Naive thymus-derived CD8-positive, alpha-beta T cell (primary cell): ENCODE measurements at regions of chr19 and their contacts with region 1.

Region 1: DNA sequence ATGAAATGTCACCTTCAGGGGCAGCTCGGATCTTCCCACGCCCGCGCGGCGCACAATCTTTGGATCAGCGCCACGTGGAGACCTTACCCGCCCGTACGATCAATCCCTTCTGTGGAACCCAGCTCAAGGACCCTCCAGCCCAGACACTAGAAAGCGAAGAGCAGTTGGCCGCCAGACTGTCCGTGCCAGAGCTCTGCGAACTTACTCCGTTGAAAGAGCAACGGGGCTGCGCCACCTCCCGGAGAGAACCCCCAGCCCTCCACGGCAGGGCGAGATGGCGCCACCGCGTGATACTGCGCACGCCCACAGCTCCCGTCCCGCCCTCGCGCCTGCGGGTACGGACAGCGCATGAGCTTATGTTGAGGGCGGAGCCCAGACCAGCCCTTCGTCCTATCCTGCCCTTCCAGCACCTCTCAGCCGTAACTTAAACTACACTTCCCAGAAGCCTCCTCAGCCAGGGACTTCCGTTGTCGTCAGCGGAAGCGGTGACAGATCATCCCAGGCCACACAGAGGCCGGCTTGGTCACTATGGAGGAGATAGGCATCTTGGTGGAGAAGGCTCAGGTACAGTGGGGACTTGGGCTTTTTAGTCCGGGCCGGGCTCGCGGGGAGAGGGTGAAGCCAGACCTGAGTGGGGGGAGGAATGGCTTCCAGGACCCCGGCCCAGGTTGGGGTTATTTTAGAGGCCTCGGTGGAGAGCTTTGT is at the start of gene PSMC4:
- DNase-seq: peak; percentile 93 to 99 (median 98)
- ATAC-seq: peak; percentile 95 to 96
- H3K4me3 Mint-ChIP-seq: peak within 1 kb of the TSS; percentile 93 to 100 (median 98)
- H3K27ac Mint-ChIP-seq: peak within 1 kb of the TSS; percentile 96 to 100 (median 100)
- H3K4me1 Mint-ChIP-seq: peaks cover 33 to 62% (median 56%) of the 10 kb centered on the region in 4 donors
- H3K27me3 Mint-ChIP-seq: no peaks in the 10 kb centered on the region
- polyA plus RNA-seq, gene PSMC4: 71.3 to 80.4 (median 72.8) TPM

Region 2: DNA sequence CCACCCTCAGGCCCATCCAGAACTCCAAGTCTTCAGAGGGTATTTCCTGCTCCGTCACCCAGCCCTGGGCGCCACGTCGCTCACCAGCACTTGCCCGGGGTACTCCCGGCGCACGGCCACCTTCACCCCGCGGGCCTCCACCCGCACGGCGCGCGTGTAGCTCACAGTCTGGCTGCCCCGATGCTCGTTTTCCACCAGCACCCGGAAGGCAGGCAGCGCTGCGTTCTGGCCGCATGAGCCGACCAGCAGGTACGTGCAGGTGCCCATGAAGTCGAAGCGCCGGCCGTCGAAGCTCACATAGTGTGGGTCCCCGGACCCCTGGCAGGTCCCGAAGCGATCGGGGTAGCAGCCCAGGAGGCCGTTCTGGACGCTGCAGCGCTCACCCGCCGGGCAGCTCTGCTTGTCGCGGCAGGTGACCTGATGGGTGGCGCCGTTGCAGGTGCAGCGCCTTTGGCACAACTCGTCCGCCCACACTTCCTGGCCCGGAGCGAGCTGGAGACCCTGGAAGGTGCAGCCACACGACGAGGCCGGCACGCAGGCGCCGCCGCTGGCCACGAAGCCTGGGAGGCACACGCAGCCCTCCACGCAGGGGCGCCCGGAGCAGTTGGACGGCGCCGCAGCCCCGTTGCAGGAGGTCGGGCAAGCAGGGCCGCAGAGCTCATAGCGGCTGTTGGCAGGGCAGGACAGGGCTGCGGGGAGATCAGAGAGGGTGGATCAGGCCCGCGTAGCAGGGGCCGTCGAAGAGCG is 55.6 kb before region 1 on chr19:
- POLR2A ChIA-PET with region 1: interaction called, 19 read pairs
- DNase-seq: no peak
- ATAC-seq: no peak
- H3K4me3 Mint-ChIP-seq: no peak overlapping the region
- H3K27ac Mint-ChIP-seq: no peak overlapping the region
- H3K4me1 Mint-ChIP-seq: peaks cover 8 to 41% (median 30%) of the 10 kb centered on the region in 4 donors
- H3K27me3 Mint-ChIP-seq: no peaks in the 10 kb centered on the region

Region 3: DNA sequence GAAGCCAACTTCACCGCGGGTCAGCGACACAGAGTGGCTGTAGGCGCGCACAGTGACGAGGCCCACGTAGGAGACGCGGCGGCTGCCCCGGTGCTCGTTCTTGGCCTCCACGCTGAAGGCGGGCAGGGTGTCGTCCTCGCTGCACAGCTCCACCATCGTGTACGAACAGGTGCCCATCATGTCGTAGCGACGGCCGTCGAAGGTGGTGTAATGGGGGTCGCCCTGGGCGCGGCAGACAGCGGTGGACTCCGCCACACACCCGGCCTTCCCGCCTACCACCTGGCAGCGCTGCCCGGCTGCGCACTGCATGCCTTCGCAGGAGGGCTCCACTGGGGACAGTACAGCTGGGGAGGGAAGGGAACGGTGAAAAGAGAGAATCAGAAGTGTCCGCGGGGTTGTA is 46.4 kb before region 1 on chr19:
- POLR2A ChIA-PET with region 1: interaction called, 12 read pairs
- DNase-seq: no peak
- ATAC-seq: no peak
- H3K4me3 Mint-ChIP-seq: peak overlapping the region in 1 of 10 donors; percentile 12
- H3K27ac Mint-ChIP-seq: peak overlapping the region in 1 of 10 donors; percentile 45
- H3K4me1 Mint-ChIP-seq: peaks cover 10 to 38% (median 18%) of the 10 kb centered on the region in 4 donors
- H3K27me3 Mint-ChIP-seq: no peaks in the 10 kb centered on the region

Region 4: GRCh38 chr19:39941615-39942365 is 29.0 kb before region 1 on chr19:
- POLR2A ChIA-PET with region 1: interaction called, 96 read pairs
- DNase-seq: peak in 9 of 10 donors; percentile 50 to 84 (median 62)
- ATAC-seq: peak; percentile 80 to 85
- H3K4me3 Mint-ChIP-seq: peak overlapping the region; percentile 66 to 88 (median 82)
- H3K27ac Mint-ChIP-seq: peak overlapping the region; percentile 83 to 95 (median 91)
- H3K4me1 Mint-ChIP-seq: peaks cover 48 to 90% (median 77%) of the 10 kb centered on the region in 4 donors
- H3K27me3 Mint-ChIP-seq: no peaks in the 10 kb centered on the region

Region 5: GRCh38 chr19:39951686-39952085 is 19.1 kb before region 1 on chr19:
- POLR2A ChIA-PET with region 1: interaction called, 96 read pairs
- DNase-seq: no peak
- ATAC-seq: no peak
- H3K4me3 Mint-ChIP-seq: peak overlapping the region; percentile 82 to 99 (median 96)
- H3K27ac Mint-ChIP-seq: peak overlapping the region; percentile 89 to 100 (median 96)
- H3K4me1 Mint-ChIP-seq: peaks cover 34 to 95% (median 87%) of the 10 kb centered on the region in 4 donors
- H3K27me3 Mint-ChIP-seq: no peaks in the 10 kb centered on the region

Region 6: GRCh38 chr19:39996811-39997594 is 26.2 kb after region 1 on chr19 and contains the start of gene ZNF546:
- POLR2A ChIA-PET with region 1: interaction called, 16 read pairs
- DNase-seq: peak; percentile 76 to 95 (median 89)
- ATAC-seq: peak; percentile 93
- H3K4me3 Mint-ChIP-seq: peak within 1 kb of the TSS; percentile 84 to 100 (median 98)
- H3K27ac Mint-ChIP-seq: peak within 1 kb of the TSS; percentile 88 to 99 (median 96)
- H3K4me1 Mint-ChIP-seq: peaks cover 20 to 48% (median 43%) of the 10 kb centered on the region in 4 donors
- H3K27me3 Mint-ChIP-seq: no peaks in the 10 kb centered on the region
- polyA plus RNA-seq, gene ZNF546: 4.0 to 6.4 (median 6.2) TPM

Region 7: GRCh38 chr19:40025938-40026596 is 55.2 kb after region 1 on chr19:
- POLR2A ChIA-PET with region 1: no interaction called
- DNase-seq: no peak
- ATAC-seq: no peak
- H3K4me3 Mint-ChIP-seq: no peak overlapping the region
- H3K27ac Mint-ChIP-seq: peak overlapping the region in 1 of 10 donors; percentile 13
- H3K4me1 Mint-ChIP-seq: peaks cover 0 to 2% (median 0%) of the 10 kb centered on the region in 4 donors
- H3K27me3 Mint-ChIP-seq: no peaks in the 10 kb centered on the region